ENCODE measurements at regions of chr19 and their contacts with region 1.

Region 1: DNA sequence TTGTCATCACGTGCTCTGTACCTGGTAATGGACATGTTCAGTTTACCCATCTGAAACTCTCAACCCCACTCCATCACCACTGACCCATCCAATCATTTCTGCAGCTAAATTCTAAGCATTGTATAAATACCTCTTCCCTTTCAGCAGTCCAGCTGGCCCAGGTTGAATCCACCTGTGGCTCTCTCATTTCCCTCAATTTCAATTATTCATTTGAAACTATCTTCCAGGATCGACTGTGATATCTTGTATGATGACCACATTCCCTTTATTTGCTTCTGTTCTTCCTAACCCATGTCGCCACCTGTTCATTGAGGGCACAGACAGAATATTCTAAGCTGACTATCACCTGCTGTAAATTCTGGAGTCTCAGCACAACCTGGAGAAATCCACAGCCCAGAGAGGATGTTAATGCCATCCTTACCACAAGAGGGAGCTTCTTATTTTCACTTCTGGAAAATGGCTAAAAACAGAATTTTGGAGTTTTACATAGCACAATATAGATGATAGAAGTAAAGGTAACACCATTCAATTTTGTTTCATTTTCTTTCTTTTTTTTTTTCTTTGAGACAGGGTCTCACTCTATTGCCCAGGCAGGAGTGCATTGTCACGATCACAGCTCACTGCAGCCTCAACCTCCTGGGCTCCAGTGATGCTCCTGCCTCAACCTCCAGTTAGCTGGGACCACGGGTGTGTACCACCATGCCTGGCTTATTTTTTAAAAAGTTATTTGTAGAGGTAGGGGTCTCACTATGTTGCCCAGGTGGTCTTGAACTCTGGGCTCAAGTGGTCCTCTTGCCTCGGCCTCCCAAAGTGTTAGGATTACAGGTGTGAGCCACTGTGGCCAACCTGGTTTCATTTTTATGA is 38.6 kb downstream of the ZNF823 start:
- DNase-seq: no peak
- CTCF ChIP-seq: peak; percentile 54

Region 2: DNA sequence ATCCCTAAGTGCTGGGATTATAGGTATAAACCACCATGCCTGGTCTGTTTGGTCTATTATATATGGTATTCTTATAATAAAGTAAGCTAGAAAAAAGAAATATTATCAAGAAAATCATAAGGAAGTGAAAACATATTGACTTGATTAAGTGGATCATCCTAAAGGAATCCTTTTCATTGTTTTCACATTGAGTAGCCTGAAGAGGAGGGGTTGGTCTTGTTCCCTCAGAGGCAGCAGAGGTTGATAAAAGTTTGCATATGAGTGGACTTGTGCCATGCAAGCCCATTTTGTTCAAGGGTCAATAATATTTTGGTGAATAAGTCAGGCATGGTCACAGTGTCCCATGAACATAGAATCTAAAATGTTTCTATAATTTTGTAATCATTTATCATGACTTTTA is 50.2 kb before region 1 on chr19:
- CTCF ChIA-PET with region 1: no interaction called
- POLR2A ChIA-PET with region 1: no interaction called
- DNase-seq: no peak
- CTCF ChIP-seq: no peak

Region 3: DNA sequence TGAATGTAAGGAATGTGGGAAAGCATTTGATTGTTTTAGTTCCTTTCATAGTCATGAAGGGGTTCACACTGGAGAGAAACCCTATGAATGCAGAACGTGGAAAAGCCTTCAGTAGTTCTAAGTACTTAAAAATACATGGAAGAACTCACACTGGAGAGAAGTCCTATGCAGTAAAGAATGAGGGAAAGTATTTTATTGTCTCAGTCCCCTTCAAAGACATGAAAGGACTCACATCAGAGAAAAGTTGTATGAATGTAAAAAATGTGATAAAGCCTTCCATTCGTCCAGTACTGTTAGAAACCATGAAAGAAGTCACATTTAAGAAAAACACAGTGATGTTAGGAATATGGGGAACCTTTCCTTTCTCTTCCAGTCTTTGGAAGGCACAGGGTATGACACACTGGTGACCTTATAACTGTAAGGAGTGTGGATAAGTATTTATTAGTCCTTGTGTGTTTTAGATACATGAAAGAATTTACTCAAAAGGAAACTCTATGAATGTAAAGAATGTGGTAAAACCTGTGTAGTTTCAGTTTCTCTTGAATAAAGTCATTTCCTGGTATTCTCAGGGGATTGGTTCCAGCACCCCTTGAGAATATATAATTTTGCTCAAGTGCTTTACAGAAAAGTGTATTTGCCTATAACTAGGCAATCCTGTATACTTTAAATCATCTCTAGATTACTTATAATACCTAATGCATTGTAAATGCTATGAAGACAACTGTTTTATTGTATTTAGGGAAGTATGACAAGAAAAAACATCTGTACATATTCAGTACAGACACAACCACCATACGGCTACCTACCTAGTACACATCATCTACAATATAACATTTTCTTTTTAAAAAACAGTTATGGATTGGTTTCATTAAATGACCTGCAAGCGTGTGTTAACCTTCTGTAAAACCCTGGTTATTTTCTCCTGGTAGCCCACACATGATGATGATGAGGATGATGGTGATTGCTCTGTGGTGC is 14.2 kb before region 1 on chr19:
- CTCF ChIA-PET with region 1: interaction called, 23 read pairs
- POLR2A ChIA-PET with region 1: no interaction called
- DNase-seq: no peak
- CTCF ChIP-seq: no peak

Region 4: DNA sequence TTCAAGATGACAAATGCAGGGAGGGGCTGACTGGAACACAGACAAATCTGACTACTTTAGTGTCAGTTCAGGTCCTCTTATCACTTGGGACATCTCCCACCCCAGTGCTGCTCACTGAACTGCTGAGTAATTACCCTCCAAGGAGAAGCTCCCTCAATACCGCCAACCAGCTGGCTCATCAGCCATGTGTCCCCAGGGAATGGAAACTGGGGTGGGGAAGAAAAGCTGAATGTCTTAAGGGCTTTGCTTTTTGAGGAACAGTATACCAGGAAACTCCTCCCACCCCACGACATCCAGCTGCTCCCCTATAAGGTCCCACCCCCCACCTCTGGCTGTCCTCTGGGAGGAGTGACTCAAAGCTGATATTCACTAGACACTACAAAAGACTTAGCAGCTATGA is 36.5 kb after region 1 on chr19:
- CTCF ChIA-PET with region 1: interaction called, 11 read pairs
- POLR2A ChIA-PET with region 1: no interaction called
- DNase-seq: peak; percentile 57
- CTCF ChIP-seq: no peak

Measured in GM10248 (cell line).